Sciatic nerve (tissue), 2 donors: ENCODE measurements at regions of chr1 and their contacts with region 1.

Region 1: DNA sequence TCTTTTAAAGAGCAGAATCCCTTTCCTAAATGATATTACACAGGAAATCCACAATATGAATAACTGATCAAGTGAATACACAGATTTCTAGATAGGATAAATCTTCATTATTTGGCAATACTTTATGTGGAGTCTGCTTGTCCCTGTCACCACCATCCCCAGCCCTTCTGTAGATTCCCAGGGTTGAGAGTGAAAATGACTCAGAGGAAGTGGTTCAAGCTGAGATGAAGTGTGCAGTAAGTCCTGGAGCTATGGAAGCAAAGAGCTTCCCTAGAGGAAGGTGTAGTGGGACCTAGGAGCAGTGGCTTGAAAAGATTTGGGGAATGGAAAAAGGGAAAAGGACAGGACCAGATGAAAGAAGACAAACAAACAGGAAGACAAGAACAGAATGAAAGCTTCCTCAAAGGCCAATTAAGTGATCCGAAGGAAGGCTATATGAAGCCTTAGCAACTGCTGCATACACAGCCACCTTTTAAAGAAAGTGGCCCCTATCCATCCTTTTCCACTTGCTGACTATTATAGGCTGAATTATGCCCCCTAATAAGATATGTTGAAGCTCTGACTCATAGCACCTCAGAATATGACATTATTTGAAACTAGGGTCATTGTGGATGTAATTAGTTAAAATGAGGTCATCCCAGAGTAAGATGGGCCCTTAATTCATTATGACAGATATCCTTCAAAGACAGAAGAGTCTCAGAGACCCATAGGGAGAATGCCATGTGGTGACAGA is 96.5 kb upstream of the CAMK1G start:
- DNase-seq: no peak
- ATAC-seq: no peak

Region 2: DNA sequence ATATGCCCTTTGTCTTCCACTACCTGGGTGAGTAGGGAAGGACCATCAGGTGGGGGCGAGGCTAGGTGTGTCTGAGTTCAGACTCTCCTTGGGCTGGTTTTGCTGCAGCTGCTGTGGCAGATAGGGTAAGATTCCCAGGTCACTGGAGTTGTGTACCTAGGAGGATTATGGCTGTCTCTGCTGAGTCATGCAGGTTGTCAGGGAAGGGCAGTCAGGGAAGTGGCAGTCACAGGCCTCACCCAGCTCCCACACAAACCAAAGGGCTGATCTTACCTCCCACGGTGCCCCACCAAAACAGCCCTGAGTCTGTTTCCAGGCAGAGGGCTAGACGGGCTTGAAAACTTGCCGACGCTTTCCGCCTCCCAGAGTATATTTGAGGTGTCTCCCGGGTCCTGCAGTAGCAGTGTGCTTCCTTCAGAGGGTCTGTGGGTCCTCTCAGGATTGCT is 1041.2 kb before region 1 on chr1:
- intact Hi-C with region 1: no loop called
- DNase-seq: no peak
- ATAC-seq: no peak

Region 3: DNA sequence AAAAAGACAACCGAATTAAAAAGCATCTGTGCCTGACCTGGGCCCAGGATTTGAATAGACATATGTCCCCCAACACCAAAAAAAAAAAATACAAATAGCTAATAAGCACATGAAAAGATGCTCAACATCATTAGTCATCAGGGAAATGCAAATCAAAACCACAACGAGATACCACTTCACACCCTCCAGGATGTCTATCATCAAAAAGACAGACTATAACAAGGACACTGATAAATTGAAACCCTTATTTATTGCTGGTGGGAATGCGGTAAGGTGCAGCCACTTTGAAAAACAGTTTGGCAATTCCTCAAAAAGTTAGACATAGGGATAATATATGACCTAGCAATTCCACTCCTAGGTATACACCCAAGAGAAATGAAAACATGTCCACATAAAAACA is 24.1 kb after region 1 on chr1:
- intact Hi-C with region 1: loop called (anchors 2 kb)
- DNase-seq: no peak
- ATAC-seq: no peak